Pancreas (tissue), 10 donors: ENCODE measurements at regions of chr13 and their contacts with region 1.

Region 1: GRCh38 chr13:94362411-94362909 is 117.0 kb downstream of the DCT start:
- DNase-seq: peak in 4 of 6 donors; percentile 26 to 74 (median 40)
- ATAC-seq: peak; percentile 93 to 99 (median 98)
- H3K4me3 ChIP-seq: no peak overlapping the region
- H3K27ac ChIP-seq: no peak overlapping the region
- H3K4me1 ChIP-seq: no peaks in the 10 kb centered on the region
- H3K27me3 ChIP-seq: no peaks in the 10 kb centered on the region
- CTCF ChIP-seq: peak; percentile 77 to 88 (median 84)

Region 2: GRCh38 chr13:93248627-93249047 is 1113.8 kb before region 1 on chr13:
- intact Hi-C with region 1: loop called in 1 of 3 experiments (anchors 10 kb)
- DNase-seq: peak; percentile 62 to 87 (median 75)
- ATAC-seq: peak; percentile 91 to 99 (median 98)
- H3K4me3 ChIP-seq: no peak overlapping the region
- H3K27ac ChIP-seq: no peak overlapping the region
- H3K4me1 ChIP-seq: peaks cover 0 to 5% (median 0%) of the 10 kb centered on the region in 3 donors
- H3K27me3 ChIP-seq: no peaks in the 10 kb centered on the region
- CTCF ChIP-seq: peak in 3 of 4 donors; percentile 39 to 49 (median 41)